ENCODE measurements at regions of chr22 and their contacts with region 1.

Region 1: DNA sequence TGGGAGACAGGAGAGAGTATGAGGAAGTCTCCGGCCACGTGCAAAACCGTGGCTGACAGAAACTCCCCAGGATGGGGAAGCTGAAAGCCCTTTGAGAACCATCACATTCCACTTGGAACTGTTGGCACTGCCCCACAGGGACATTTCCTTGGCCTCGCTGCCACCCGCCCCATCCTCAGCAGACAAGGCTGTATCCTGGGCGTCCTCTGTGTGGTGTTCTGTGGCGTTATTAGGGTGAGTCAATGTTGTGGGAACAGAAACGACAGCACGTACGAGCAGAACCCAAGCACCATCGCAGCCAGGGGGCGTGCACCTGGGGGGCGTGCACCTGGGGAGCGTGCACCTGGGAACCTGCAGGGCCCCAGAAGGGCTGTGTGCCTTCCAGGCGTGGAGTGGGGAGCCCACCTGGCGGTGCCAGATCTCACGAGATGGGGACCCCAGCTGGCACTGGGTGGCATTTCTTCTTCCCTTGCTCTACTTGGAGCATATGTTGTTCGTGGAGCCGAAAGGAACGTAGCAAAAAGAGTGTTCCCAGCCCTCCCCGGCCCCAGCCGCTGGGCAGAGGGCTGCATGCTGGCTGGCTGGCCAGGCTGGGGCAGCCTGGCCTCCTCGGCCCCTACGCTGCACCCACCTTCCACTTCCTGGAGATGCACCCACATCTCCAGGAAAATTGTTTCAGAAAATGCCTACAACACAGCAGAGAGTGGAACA is 35.4 kb downstream of the NFAM1 start:
- DNase-seq: peak in 1 of 2 experiments; percentile 16
- H3K4me3 ChIP-seq: no peak overlapping the region
- H3K27ac ChIP-seq: no peak overlapping the region
- H3K4me1 ChIP-seq: peaks cover 11% of the 10 kb centered on the region; the same call in 1 of the 2 replicates
- H3K27me3 ChIP-seq: peaks cover 18% of the 10 kb centered on the region
- CTCF ChIP-seq: no peak

Region 2: GRCh38 chr22:42414565-42415303 is 18.0 kb after region 1 on chr22:
- CTCF ChIA-PET with region 1: no interaction called
- POLR2A ChIA-PET with region 1: interaction called, 12 read pairs
- intact Hi-C with region 1: no loop called
- DNase-seq: no peak
- H3K4me3 ChIP-seq: no peak overlapping the region
- H3K27ac ChIP-seq: no peak overlapping the region
- H3K4me1 ChIP-seq: no peaks in the 10 kb centered on the region
- H3K27me3 ChIP-seq: peaks cover 9% of the 10 kb centered on the region; the same call in 1 of the 2 replicates
- CTCF ChIP-seq: no peak

Region 3: DNA sequence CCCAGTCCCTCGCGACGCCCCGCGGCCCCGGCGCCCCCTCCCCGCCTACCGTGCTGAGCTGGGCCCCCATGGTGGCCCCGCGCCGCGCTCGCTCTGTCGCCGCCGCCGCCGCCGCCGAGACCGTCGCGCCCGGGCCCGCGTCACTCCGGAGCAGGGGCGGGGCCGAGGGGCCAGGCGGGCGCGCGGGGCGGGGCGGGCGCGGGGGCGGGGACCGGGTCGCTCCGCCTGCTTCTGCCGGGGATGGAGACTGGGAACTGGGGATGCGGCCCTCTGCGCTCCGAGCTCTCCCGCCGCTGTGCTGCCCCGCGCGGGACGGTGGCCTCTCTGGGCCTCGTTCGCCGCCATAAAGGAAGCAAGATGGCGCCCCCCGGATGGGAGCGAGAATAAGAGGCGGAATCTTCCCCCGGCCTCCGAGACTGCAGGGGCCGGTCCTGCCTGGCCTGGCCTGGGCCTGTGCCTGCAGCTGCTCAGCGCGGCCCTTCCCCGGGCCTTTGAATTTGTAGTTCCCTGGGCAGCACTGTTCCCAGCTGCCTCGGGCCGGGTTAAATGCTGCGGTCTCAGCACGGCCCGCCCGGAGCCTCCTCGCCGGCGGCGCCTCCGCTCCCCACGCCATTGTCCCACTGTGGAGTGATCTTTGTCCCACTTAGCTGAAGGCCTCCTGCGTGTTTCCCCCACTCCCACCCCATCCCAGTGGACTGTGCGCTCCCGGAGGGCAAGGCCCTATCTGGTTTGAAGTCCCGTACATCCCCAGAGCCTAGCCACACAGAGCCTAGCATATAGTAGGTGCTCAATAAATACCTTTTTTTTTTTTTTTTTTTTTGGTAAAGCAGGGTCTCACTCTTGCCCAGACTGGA is 252.7 kb after region 1 on chr22 and contains the start of gene CYB5R3:
- CTCF ChIA-PET with region 1: no interaction called
- POLR2A ChIA-PET with region 1: no interaction called
- intact Hi-C with region 1: no loop called
- DNase-seq: peak; percentile 40 to 70
- H3K4me3 ChIP-seq: peak within 1 kb of the TSS; percentile 100
- H3K27ac ChIP-seq: no peak within 1 kb of the TSS
- H3K4me1 ChIP-seq: peaks cover 31% of the 10 kb centered on the region
- H3K27me3 ChIP-seq: no peaks in the 10 kb centered on the region
- CTCF ChIP-seq: no peak
- total RNA-seq, gene CYB5R3: 97.6 and 106 TPM in 2 replicates